Common myeloid progenitor, CD34-positive (primary cell): ENCODE measurements at regions of chr6 and their contacts with region 1.

Region 1: DNA sequence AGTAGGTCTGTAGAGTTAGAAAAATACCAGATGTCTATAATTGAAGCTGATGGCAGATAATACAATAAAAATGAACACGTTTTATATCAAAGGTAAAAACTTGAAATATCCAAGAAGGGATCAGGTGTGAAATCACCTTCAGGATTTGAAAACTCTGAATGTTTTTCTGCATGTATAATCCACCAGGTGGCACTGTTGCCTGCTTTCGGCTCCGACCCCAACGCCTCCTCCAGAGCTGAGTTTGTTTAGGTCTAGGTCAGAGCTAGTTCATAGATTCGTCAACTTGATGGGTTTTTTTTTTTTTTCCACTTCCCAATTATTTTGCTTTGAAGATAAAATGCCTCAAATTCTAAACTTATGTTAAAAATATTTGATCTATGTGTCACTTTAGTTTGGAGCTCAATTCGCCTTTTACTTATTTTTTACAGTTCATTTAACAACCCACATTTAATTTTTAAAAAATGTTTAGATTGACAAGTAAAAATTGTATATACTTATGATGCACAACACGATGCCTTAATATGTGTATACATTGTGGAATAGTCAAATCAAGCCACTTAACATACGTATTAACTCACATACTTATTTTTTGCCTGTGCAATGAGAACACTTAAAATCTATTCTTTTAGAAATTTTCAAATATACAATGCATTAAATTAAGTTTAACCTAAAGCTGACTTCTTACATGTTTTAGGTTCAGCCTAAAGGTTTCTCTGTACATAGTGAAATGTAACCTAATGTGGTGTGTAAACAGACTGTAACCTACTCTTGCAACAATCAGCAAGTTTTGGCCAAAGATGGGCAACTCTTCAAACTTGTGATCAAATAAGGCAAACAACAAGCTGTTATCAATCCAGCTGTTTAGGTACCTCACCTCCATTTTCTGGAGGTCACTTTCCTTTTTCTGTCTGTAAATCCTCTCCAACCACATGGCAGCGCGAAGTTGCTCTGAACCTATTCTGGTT is 39.4 kb upstream of the ENPP4 start:
- DNase-seq: peak; percentile 61 to 73 (median 70)
- H3K4me3 ChIP-seq: no peak overlapping the region
- H3K27ac ChIP-seq: no peak overlapping the region
- H3K4me1 ChIP-seq: no peaks in the 10 kb centered on the region
- H3K27me3 ChIP-seq: peaks cover 0 to 1% (median 0%) of the 10 kb centered on the region in 5 experiments

Region 2: GRCh38 chr6:46011241-46012085 is 78.9 kb before region 1 on chr6:
- CTCF ChIA-PET with region 1: no interaction called
- POLR2A ChIA-PET with region 1: no interaction called
- DNase-seq: peak; percentile 40 to 87 (median 80)
- H3K4me3 ChIP-seq: peak overlapping the region in 1 of 7 experiments; percentile 29
- H3K27ac ChIP-seq: no peak overlapping the region
- H3K4me1 ChIP-seq: peaks cover 3 to 31% (median 21%) of the 10 kb centered on the region in 4 experiments
- H3K27me3 ChIP-seq: peaks cover 0 to 29% (median 22%) of the 10 kb centered on the region in 5 experiments

Region 3: DNA sequence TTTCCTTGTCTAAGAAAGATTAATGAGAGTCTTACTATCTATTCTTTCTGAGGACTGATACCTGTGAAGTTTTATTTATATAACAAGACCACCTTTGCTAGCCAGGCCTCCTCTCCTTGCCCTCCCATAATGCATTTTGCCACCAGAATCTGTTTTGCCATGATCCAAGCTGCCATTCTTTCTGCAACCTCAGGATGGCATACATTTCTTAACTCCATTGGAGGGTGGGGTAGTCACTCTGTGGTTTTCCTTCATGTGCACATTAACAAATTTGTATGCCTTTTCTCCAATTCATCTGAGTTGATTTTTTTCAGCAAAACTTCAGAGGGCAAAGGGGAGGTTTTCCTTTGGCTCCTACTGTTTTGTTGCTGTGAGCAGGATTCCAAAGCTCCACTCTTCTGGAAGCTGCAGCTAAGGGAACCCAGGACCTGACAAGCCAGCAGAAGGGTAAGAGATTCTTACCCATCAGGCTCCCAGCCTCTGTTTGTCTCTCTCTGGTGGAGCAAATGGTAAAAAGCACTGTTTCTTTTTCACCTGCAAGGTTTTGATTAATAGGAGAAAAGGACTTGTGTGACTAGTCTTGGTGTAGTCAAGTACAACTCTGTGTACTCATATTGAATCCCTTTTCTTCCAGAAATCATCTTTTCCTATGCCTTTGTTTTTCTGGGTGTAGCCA is 13.2 kb after region 1 on chr6:
- CTCF ChIA-PET with region 1: interaction called, 11 read pairs
- POLR2A ChIA-PET with region 1: no interaction called
- DNase-seq: peak in 2 of 3 donors; percentile 15 to 19
- H3K4me3 ChIP-seq: no peak overlapping the region
- H3K27ac ChIP-seq: no peak overlapping the region
- H3K4me1 ChIP-seq: no peaks in the 10 kb centered on the region
- H3K27me3 ChIP-seq: no peaks in the 10 kb centered on the region

Region 4: GRCh38 chr6:46221222-46221793 is 130.9 kb after region 1 on chr6:
- CTCF ChIA-PET with region 1: interaction called, 22 read pairs
- POLR2A ChIA-PET with region 1: no interaction called
- DNase-seq: peak; percentile 50 to 76 (median 72)
- H3K4me3 ChIP-seq: no peak overlapping the region
- H3K27ac ChIP-seq: no peak overlapping the region
- H3K4me1 ChIP-seq: peaks cover 10 to 27% (median 22%) of the 10 kb centered on the region in 4 experiments
- H3K27me3 ChIP-seq: no peaks in the 10 kb centered on the region

Region 5: GRCh38 chr6:46410334-46410953 is 320.0 kb after region 1 on chr6:
- CTCF ChIA-PET with region 1: interaction called, 56 read pairs
- POLR2A ChIA-PET with region 1: no interaction called
- DNase-seq: peak; percentile 54 to 80 (median 77)
- H3K4me3 ChIP-seq: no peak overlapping the region
- H3K27ac ChIP-seq: no peak overlapping the region
- H3K4me1 ChIP-seq: no peaks in the 10 kb centered on the region
- H3K27me3 ChIP-seq: no peaks in the 10 kb centered on the region